ENCODE measurements at regions of chr3 and their contacts with region 1.

Region 1: GRCh38 chr3:113019182-113020137 is 28.7 kb downstream of the GTPBP8 start:
- DNase-seq: peak; percentile 93

Region 2: DNA sequence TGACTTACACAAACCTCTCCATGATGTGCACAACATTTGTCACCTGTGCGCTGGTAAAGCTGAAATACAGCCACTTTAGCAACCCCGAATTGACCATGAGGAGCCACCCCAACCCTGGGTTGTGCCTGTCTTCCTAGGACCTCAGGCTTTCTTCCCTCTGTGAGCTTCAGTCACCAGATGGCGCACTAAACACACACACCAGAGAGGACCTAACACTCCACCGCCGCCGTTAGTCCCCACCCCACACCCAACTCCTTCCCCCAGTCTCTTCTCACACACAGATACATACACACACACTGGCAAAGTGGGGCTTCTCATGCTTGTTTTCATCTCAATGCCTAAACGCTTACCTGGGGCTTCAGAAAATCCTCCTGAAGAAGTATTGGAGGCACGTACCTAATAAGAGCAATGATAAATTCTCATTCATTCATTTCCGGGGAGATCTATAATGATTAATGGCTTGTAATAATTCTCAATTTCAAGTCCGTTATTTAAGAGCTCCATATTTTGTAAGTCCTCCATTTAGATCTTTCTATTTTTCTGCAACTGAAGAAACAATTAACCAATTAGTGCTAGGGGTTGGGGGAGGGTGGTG is 376.5 kb before region 1 on chr3:
- CTCF ChIA-PET with region 1: interaction called, 3 read pairs
- POLR2A ChIA-PET with region 1: interaction called, 12 read pairs
- DNase-seq: peak; percentile 84

Region 3: GRCh38 chr3:112773864-112774590 is 245.4 kb before region 1 on chr3:
- CTCF ChIA-PET with region 1: no interaction called
- POLR2A ChIA-PET with region 1: no interaction called
- DNase-seq: no peak

Region 4: DNA sequence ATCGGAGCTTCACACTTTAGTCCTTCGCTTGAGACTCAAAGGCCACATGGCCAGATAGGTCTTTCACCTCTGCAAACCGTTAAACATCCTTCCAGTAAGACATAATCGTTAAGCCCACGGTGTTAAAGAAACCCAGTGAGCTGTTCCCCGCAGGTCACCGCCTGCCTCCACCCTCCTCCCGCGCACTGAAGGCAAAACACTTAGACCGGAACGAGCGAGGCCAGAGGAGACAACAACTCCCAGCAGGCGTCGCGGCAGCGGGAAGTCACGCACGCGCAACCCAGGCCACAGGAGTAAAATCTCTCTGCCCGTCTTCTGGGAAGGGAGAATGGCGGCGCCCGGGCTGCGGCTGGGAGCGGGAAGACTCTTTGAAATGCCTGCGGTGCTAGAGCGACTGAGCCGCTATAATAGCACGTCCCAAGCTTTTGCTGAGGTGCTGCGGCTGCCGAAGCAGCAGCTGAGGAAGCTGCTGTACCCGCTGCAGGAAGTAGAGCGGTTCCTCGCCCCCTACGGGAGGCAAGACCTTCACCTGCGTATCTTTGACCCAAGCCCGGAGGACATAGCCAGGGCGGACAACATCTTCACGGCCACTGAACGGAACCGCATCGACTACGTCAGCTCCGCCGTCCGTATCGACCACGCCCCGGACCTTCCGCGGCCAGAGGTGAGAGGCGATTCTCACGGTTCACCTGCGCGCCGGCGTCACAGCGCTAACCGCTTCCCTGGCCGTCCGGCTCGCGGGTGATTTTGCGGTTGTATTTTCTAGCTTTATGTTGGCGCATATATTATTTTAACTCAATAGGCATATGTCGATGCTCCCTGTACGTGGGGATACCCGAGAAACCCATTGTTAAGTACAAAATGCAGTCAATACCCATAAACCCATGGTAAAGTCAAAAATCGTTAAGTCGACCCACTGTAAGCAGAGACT is 28.5 kb before region 1 on chr3 and contains the start of gene GTPBP8:
- CTCF ChIA-PET with region 1: no interaction called
- POLR2A ChIA-PET with region 1: interaction called, 12 read pairs
- DNase-seq: peak; percentile 87

Region 5: DNA sequence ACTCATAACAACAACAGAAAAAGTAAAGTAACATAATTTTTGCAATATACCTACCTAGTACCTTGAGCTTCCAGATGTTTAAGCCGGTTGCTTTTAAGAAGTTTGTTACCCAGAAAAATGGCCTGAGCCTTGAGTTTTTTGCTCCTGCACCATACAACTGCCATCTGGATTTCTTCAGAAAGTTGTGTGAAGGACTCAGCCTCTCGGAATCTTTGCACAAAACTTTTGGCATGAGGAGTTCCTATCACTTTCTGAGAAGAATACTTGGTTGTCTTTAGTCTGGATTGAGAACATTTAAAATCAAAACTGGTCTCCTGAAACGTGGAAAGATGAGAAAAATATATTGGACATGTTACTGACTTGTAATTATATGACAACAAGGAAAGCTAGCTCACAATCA is 11.3 kb before region 1 on chr3:
- CTCF ChIA-PET with region 1: no interaction called
- POLR2A ChIA-PET with region 1: interaction called, 22 read pairs
- DNase-seq: no peak

Measured in HEK293T (cell line).